Caco-2 (cell line): ENCODE measurements at regions of chr7 and their contacts with region 1.

Region 1: DNA sequence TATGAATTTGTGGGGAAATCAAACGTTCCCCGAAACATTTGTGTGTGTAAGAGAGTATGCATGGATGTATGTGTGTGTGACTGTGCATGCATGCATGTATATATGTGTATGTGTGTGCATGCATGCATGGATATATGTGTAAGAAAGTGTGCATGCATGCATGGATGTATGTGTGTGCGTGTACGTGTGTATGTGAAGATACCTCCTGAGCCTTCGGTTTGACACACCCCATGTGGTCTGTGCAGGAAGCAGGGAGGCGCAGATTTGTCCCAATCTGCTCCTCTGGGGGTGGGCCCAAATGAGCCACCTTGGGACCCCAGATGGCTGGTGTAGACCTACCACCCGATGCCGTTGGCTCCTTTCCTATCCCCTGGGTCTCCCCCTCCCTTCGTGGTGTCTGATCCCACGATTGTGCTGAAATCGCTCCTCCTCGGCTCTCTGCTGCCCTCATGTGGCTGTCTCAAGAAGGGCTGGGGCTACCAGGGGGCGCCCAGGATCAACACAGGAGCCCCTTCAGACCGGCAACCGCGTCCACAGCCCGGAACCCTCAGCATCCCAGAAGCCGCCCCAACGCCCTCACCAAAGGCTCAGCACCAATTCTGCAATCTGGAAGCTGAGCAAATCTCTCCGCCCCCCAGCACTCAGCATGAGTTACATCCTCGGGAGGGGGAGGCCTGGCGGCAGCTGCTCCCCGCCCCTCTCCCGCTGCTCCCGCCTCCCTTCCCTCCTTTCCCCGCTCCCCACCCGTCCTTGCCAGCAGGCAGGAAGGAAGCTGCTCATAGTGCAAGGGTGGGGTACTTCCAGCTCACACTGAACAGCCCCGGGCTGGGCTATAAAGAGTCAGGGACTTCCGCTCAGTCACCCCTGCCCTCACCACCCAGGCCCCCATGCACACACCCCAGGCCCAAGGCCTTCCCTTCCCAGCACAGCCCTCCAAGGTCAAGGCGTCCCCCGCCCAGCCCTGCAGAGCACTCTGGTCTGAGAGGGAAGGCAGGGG is 2.3 kb upstream of the NOS3 start:
- DNase-seq: peak in 1 of 2 experiments; percentile 39
- H3K4me3 ChIP-seq: no peak overlapping the region
- H3K4me3 Mint-ChIP-seq: no peak overlapping the region
- H3K27ac Mint-ChIP-seq: no peak overlapping the region
- H3K4me1 ChIP-seq: no peaks in the 10 kb centered on the region
- H3K4me1 Mint-ChIP-seq: no peaks in the 10 kb centered on the region
- H3K27me3 ChIP-seq: no peaks in the 10 kb centered on the region; the same call in 1 of the 2 replicates
- H3K27me3 Mint-ChIP-seq: no peaks in the 10 kb centered on the region
- CTCF ChIP-seq: peak; percentile 52 to 56

Region 2: GRCh38 chr7:150898475-150899011 is 90.0 kb before region 1 on chr7:
- CTCF ChIA-PET with region 1: interaction called, 7 read pairs
- POLR2A ChIA-PET with region 1: no interaction called
- intact Hi-C with region 1: loop called (anchors 1 kb)
- DNase-seq: peak; percentile 78 to 82
- H3K4me3 ChIP-seq: no peak overlapping the region
- H3K4me3 Mint-ChIP-seq: peak overlapping the region; percentile 17
- H3K27ac Mint-ChIP-seq: no peak overlapping the region
- H3K4me1 ChIP-seq: peaks cover 11% of the 10 kb centered on the region; the same call in 1 of the 2 replicates
- H3K4me1 Mint-ChIP-seq: peaks cover 19% of the 10 kb centered on the region
- H3K27me3 ChIP-seq: no peaks in the 10 kb centered on the region; the same call in 1 of the 2 replicates
- H3K27me3 Mint-ChIP-seq: peaks cover 15% of the 10 kb centered on the region
- CTCF ChIP-seq: peak; percentile 91 to 95

Region 3: GRCh38 chr7:150978136-150978789 is 10.3 kb before region 1 on chr7 and contains the start of gene KCNH2:
- CTCF ChIA-PET with region 1: no interaction called
- POLR2A ChIA-PET with region 1: interaction called, 3 read pairs
- intact Hi-C with region 1: loop called (anchors 1 kb)
- DNase-seq: peak in 1 of 2 experiments; percentile 52
- H3K4me3 ChIP-seq: peak within 1 kb of the TSS; percentile 48
- H3K4me3 Mint-ChIP-seq: peak within 1 kb of the TSS; percentile 73
- H3K27ac Mint-ChIP-seq: no peak within 1 kb of the TSS
- H3K4me1 ChIP-seq: peaks cover 16% of the 10 kb centered on the region
- H3K4me1 Mint-ChIP-seq: peaks cover 11% of the 10 kb centered on the region
- H3K27me3 ChIP-seq: no peaks in the 10 kb centered on the region
- H3K27me3 Mint-ChIP-seq: peaks cover 18% of the 10 kb centered on the region
- CTCF ChIP-seq: no peak
- total RNA-seq, gene KCNH2: 0.60 and 0.66 TPM in 2 replicates